HEK293 (cell line): ENCODE measurements at regions of chr3 and their contacts with region 1.

Region 1: DNA sequence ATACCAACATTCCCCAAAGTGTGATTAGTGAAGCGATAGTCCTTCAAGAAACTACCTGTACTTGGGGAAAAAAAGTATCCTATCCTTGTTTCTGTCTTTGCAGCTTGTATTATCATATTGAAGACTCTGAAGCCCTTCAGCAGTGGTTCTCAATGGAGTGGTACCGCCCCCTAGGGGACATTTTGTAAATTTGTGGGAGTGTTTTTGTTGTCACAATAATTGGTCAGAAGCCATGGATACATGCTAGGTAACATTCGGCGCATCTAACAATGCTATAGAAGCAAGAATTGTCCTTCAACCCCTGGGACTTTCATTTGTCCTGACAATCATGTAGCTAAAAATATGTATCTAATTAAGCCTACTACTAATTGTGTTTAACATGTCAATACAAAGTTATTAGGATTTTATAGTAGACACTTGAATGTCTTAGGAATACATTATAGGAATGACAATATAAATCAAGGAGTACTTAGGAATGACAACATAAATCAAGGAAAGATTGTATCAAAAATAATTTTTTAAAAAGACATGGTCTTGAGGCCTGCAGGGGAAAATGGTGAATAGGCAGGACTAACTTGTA is 53.7 kb downstream of the NMD3 start:
- H3K4me3 ChIP-seq: no peak overlapping the region
- H3K27ac ChIP-seq: no peak overlapping the region
- H3K4me1 ChIP-seq: no peaks in the 10 kb centered on the region
- CTCF ChIP-seq: no peak

Region 2: DNA sequence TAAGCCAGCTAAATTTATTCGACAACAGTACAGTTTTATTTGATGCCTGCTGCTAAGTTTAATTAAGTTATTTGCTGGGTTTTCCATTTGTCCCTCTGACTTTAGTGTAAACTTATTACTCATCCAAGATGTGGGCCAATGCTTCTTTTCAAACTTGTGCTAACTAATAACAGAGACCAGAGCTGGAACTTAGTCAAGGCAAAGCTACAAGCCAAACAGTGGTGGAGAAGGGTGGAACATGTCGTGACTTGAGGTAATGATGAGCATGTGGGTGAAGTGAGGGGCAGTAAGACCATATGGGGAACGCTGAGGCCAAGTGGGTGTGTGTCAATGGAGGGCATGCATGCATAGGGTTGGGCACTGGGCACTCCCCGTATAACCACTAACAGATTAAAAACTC is 10.2 kb after region 1 on chr3:
- CTCF ChIA-PET with region 1: interaction called, 10 read pairs
- POLR2A ChIA-PET with region 1: no interaction called
- H3K4me3 ChIP-seq: no peak overlapping the region
- H3K27ac ChIP-seq: no peak overlapping the region
- H3K4me1 ChIP-seq: no peaks in the 10 kb centered on the region
- CTCF ChIP-seq: no peak

Region 3: DNA sequence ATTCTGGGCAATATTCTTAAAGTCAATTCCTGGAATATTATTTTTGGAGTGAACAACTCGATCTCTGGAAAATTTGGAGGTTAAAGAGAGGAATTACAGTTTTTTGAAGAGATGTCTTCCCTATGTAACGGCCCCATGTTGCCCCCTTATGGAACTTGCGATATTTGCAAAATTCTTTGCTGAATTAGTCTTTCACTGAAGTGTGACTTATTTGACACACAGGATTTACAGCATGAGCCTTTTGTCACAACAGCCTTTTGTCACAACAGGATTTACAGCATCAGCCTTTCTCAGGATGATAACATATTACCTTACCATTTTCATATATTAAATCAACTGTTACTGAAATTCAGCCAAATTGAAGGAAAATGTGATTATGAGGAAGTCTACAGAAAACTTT is 134.3 kb after region 1 on chr3:
- CTCF ChIA-PET with region 1: interaction called, 14 read pairs
- POLR2A ChIA-PET with region 1: no interaction called
- H3K4me3 ChIP-seq: no peak overlapping the region
- H3K27ac ChIP-seq: no peak overlapping the region
- H3K4me1 ChIP-seq: no peaks in the 10 kb centered on the region
- CTCF ChIP-seq: peak; percentile 52; the same call in 1 of the 2 replicates